ENCODE measurements at regions of chr3 and their contacts with region 1.

Region 1: GRCh38 chr3:52291508-52292181 is 4.0 kb downstream of the GLYCTK start:
- DNase-seq: no peak
- H3K4me3 ChIP-seq: no peak overlapping the region
- H3K27ac ChIP-seq: no peak overlapping the region
- H3K4me1 ChIP-seq: peaks cover 16% of the 10 kb centered on the region
- H3K27me3 ChIP-seq: no peaks in the 10 kb centered on the region
- CTCF ChIP-seq: peak in 1 of 3 experiments; percentile 7
- POLR2A ChIP-seq: no peak

Region 2: DNA sequence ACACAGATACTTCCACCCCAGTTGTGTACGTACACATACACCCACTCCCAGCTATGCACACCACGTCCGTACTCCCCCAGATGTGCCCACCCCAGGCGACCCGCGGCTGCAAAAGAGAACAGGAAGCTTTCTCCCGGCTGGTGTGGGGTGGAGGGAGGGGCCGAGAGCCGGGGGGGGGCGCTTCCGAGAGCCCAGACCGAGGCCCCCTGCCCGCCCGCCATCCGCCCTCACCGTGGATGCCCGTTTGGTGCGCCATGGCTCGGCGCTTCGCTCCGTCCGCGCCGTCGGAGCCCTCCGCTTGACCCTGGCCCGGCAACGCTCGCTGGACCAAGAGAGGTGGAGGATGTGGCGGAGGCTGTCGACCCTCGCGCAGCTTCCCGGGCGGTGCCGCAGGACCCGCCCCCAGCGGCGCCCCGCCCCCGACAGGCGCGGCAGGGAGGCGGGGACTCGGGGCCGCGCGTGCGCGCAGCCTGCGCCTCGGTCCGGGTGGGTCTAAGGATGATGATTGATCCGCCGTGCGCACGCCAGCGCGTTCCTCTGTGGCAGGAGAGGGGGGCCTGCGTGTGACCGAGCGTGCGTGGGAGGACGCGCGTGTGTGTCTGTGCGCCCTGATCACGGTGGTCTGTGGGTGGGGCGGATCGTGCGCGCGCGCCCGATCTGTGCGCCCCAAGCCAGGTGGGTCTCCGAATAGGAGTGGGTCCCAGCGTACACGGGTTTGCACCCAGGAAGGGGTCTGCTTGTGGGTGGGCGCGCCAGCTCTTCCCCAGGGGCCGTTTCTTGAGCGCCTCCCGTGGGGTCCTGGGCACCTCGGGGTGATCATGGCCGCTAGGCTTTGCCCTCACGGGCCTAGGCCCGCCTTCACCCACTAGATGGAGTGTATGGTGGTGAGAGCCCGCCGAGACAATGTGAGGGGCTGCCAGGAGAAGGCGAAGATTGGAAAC is 52.6 kb before region 1 on chr3 and contains the start of gene TWF2:
- intact Hi-C with region 1: loop called (anchors 5 kb)
- DNase-seq: peak; percentile 85
- H3K4me3 ChIP-seq: peak within 1 kb of the TSS; percentile 87 to 94
- H3K27ac ChIP-seq: peak within 1 kb of the TSS; percentile 93 to 96
- H3K4me1 ChIP-seq: peaks cover 38% of the 10 kb centered on the region
- H3K27me3 ChIP-seq: no peaks in the 10 kb centered on the region
- CTCF ChIP-seq: peak; percentile 16 to 50 (median 36)
- POLR2A ChIP-seq: no peak
- total RNA-seq, gene TWF2: 36.5 to 58.1 TPM

Region 3: GRCh38 chr3:52339612-52340011 is 48.0 kb after region 1 on chr3:
- intact Hi-C with region 1: loop called (anchors 5 kb)
- DNase-seq: peak; percentile 51
- H3K4me3 ChIP-seq: no peak overlapping the region
- H3K27ac ChIP-seq: no peak overlapping the region
- H3K4me1 ChIP-seq: peaks cover 4% of the 10 kb centered on the region
- H3K27me3 ChIP-seq: no peaks in the 10 kb centered on the region
- CTCF ChIP-seq: peak; percentile 60 to 73 (median 61)
- POLR2A ChIP-seq: no peak